Breast epithelium (tissue), 4 donors: ENCODE measurements at regions of chr7 and their contacts with region 1.

Region 1: DNA sequence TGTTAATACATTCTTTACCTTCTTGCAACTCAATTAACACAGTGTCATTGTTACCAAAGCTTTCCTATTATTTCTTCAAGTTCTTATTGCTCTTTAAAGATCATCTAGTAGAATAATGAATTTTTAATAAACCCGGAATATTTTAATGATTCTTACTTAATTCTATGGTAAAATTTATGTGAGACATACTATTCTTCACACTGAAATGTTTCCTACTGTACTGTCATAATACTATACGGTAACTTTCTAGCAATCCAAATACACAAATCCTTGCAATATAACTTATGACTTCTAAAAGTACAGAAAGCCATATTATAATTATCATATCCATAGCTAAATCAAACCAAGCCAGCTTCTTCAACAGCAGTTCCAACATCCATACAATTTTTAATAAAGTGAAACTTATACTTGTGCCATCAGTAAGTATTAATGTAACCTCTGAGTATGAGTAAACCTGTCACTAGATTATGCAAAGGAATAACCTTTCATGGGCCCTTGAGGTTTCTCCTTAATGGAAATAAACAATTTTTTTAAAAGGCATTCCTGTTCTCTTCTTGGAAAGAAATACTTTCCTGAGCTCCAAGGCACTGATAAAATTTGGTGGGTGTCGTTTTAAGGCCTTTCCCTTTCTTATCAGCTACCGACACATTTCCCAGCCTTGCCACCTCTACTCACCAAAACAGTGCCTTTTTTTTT is 87.4 kb downstream of the IMMP2L start:
- DNase-seq: no peak
- H3K4me3 ChIP-seq: no peak overlapping the region
- H3K27ac ChIP-seq: no peak overlapping the region
- H3K4me1 ChIP-seq: no peaks in the 10 kb centered on the region
- H3K27me3 ChIP-seq: no peaks in the 10 kb centered on the region
- CTCF ChIP-seq: no peak
- POLR2A ChIP-seq: no peak

Region 2: GRCh38 chr7:109660401-109660800 is 1814.5 kb before region 1 on chr7:
- intact Hi-C with region 1: no loop called
- DNase-seq: no peak
- H3K4me3 ChIP-seq: no peak overlapping the region
- H3K27ac ChIP-seq: no peak overlapping the region
- H3K4me1 ChIP-seq: no peaks in the 10 kb centered on the region
- H3K27me3 ChIP-seq: no peaks in the 10 kb centered on the region
- CTCF ChIP-seq: no peak
- POLR2A ChIP-seq: no peak

Region 3: DNA sequence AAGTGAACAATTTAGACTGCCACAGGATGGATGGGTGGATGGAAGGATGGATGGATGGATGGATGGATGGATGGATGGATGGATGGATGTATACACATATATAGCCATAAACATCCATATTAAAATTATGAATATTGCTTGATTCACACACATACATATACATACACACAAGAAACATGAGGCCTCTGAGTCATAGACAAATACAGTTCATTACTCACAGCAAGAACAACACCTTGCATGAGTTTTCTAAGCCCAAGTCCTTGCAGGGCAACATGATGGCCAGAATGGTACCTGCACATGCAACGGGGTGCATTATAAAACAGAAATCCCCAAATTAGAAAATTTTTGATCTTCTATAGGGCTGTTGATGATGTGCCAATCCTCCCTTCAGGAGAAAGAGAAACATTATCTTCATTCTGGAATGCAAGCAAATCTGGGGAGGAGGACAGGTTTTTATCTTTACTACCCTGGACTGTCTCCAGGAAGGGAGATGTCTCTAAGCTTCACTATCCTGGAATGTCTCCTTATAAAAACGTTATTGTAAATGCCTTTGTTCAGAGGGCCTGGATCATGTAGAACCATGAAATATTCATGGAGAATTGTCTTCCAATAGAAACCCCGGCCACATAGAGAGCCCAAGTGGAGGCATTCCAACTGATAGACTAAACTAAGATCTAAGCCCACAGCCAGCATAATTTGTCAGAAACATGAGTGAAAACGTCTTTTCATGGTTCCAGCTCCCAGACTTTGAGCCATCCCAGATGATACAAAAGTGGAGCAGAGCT is 622.5 kb before region 1 on chr7:
- intact Hi-C with region 1: no loop called
- DNase-seq: no peak
- H3K4me3 ChIP-seq: no peak overlapping the region
- H3K27ac ChIP-seq: no peak overlapping the region
- H3K4me1 ChIP-seq: no peaks in the 10 kb centered on the region
- H3K27me3 ChIP-seq: no peaks in the 10 kb centered on the region
- CTCF ChIP-seq: no peak
- POLR2A ChIP-seq: no peak

Region 4: DNA sequence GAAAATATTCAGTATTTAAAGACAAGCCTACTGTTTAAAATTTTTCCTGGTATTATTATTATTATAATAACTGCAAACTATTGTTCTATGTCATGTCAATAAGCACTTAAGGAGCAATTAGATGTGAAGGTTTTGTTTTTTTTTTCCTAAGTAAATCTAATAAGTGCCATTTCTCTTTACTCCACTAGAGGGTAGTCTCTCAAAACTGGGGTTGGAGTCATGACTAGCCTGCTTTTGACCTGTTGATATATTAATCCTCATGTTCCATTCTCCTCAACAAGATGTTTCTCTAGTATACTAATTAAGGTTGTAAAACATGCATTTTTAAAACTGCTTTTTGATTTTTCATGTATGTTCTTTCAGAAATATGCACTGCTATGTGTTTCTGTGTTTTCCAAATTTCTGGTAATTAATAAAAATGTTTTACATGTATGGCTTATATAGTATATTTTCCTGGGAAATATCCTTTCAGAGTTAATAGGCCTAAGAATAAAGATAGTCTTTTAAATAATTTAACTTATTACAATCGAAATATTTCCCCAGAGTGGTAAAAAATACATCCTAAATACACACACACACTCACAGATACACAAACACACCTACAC is 384.9 kb before region 1 on chr7:
- intact Hi-C with region 1: no loop called
- DNase-seq: no peak
- H3K4me3 ChIP-seq: no peak overlapping the region
- H3K27ac ChIP-seq: no peak overlapping the region
- H3K4me1 ChIP-seq: no peaks in the 10 kb centered on the region
- H3K27me3 ChIP-seq: no peaks in the 10 kb centered on the region
- CTCF ChIP-seq: peak; percentile 33 to 59 (median 36)
- POLR2A ChIP-seq: no peak

Region 5: GRCh38 chr7:111301891-111302290 is 173.0 kb before region 1 on chr7:
- intact Hi-C with region 1: no loop called
- DNase-seq: no peak
- H3K4me3 ChIP-seq: no peak overlapping the region
- H3K27ac ChIP-seq: no peak overlapping the region
- H3K4me1 ChIP-seq: no peaks in the 10 kb centered on the region
- H3K27me3 ChIP-seq: no peaks in the 10 kb centered on the region
- CTCF ChIP-seq: no peak
- POLR2A ChIP-seq: no peak

Region 6: GRCh38 chr7:111657018-111657417 is 182.1 kb after region 1 on chr7:
- intact Hi-C with region 1: loop called (anchors 5 kb)
- DNase-seq: no peak
- H3K4me3 ChIP-seq: no peak overlapping the region
- H3K27ac ChIP-seq: no peak overlapping the region
- H3K4me1 ChIP-seq: no peaks in the 10 kb centered on the region
- H3K27me3 ChIP-seq: no peaks in the 10 kb centered on the region
- CTCF ChIP-seq: no peak
- POLR2A ChIP-seq: no peak